ENCODE measurements at regions of chr10 and their contacts with region 1.

Region 1: DNA sequence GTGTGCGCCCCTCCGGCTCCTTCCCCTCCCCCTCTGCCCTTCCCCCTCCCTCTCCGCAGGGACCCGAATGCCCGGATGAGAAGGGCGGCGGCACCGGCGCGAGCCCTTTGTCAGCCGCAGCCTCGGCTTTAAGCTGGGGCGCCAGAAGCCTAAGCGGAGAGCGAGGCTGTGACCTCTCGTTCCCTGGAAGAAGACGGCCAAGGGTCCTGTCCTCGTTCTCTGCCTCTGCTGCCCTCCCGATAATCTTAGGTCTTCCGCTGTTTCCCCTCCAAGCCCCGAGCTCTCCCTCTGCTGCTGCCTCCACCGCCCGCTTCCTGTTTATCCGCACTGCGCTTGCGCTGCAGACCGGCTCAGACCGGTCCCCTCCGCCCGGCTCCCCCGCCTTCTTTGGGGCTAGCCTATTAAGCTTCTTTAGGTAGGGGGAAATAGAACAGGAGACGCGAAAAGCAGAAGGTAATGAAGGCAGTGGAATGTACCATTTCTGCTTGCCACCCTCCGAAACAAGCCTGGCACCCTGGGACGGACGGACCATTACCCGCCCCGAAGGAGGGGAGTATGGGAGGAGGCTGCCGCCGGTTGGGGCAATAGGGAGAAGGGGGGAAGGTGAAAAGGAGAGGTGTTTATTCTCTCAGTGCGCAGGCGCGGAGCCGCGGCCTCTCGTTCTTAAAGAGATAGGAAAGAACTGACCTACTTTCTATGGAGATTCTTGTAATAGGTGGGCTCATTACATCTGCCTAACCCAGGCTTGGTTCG is at the start of gene OGA:
- DNase-seq: peak; percentile 99
- H3K4me3 Mint-ChIP-seq: peak within 1 kb of the TSS; percentile 89
- H3K27ac Mint-ChIP-seq: peak within 1 kb of the TSS; percentile 95
- H3K4me1 Mint-ChIP-seq: peaks cover 48% of the 10 kb centered on the region
- H3K27me3 Mint-ChIP-seq: no peaks in the 10 kb centered on the region
- total RNA-seq, gene OGA: 99.9 and 102 TPM in 2 replicates

Region 2: DNA sequence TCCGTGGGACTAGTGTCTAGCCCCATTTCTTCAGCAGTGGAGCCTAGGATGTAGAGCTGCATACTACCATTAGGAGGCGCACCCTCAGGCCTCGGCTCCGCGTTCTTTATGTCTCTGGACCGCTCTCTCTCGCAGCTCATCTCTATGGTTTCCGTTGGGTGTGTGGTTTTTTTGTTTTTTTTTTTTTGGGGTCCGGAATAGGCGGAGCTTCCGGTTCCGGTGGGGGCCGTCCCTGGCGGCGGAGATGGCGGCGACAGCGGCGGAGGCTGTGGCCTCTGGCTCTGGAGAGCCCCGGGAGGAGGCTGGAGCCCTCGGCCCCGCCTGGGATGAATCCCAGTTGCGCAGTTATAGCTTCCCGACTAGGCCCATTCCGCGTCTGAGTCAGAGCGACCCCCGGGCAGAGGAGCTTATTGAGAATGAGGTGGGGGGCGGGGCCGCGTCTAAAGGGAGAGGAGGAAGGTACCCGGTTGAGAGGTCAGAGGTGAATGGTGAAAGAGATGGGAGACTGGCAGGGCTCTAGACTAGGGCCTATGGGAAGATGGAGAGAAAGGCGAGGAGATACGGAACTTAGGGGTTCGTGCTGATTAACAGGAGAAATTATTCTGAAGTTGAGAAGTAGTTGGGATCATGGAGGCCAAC is 1282.5 kb before region 1 on chr10 and contains the start of gene HIF1AN:
- intact Hi-C with region 1: loop called (anchors 10 kb)
- DNase-seq: peak; percentile 97
- H3K4me3 Mint-ChIP-seq: no peak within 1 kb of the TSS
- H3K27ac Mint-ChIP-seq: no peak within 1 kb of the TSS
- H3K4me1 Mint-ChIP-seq: peaks cover 29% of the 10 kb centered on the region
- H3K27me3 Mint-ChIP-seq: no peaks in the 10 kb centered on the region
- total RNA-seq, gene HIF1AN: 47.4 and 51.3 TPM in 2 replicates

Region 3: DNA sequence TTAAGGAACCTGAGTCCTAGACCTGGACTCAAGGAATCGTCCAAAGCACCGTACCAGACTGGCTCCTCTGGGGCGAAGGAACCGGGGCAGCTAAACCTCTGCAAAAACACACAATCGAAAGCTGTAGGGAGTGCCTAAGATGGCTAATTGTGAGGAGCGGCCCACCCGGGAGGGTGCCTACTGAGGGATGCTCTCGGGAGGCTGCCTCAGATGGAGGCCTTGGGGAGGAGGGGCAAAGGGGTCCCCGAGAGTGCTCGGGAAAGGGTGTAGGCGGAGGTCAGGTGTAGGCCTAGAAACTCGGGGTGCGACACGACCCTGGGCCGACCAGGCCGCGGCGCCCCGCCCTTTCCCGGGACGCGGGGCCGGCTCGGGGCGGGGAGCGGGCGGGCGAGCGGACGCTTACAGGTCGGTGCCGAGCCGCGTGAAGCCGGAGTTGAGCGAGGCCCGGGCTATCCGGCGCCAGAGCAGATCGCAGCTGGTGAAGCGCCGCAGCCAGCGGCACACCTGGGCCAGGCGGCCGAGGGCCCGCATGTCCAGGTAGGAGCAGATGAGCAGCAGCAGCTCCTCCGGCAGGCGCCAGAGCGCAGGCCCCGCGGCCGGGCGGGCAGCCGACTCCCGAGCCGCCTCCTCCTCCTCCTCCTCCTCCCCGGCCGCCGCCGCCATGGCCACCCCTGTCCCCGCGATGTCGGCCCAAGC is 124.2 kb before region 1 on chr10:
- intact Hi-C with region 1: loop called (anchors 5 kb)
- DNase-seq: peak; percentile 93
- H3K4me3 Mint-ChIP-seq: peak overlapping the region; percentile 98
- H3K27ac Mint-ChIP-seq: peak overlapping the region; percentile 99
- H3K4me1 Mint-ChIP-seq: peaks cover 24% of the 10 kb centered on the region
- H3K27me3 Mint-ChIP-seq: no peaks in the 10 kb centered on the region

Region 4: GRCh38 chr10:101807158-101807557 is 11.1 kb before region 1 on chr10:
- intact Hi-C with region 1: loop called (anchors 1 kb)
- DNase-seq: no peak
- H3K4me3 Mint-ChIP-seq: no peak overlapping the region
- H3K27ac Mint-ChIP-seq: no peak overlapping the region
- H3K4me1 Mint-ChIP-seq: peaks cover 9% of the 10 kb centered on the region
- H3K27me3 Mint-ChIP-seq: no peaks in the 10 kb centered on the region

Region 5: GRCh38 chr10:101840741-101841453 is 22.6 kb after region 1 on chr10:
- intact Hi-C with region 1: loop called (anchors 2 kb)
- DNase-seq: peak; percentile 94
- H3K4me3 Mint-ChIP-seq: peak overlapping the region; percentile 86
- H3K27ac Mint-ChIP-seq: peak overlapping the region; percentile 62
- H3K4me1 Mint-ChIP-seq: peaks cover 38% of the 10 kb centered on the region
- H3K27me3 Mint-ChIP-seq: peaks cover 10% of the 10 kb centered on the region

Region 6: GRCh38 chr10:101952191-101952590 is 133.9 kb after region 1 on chr10:
- intact Hi-C with region 1: no loop called
- DNase-seq: no peak
- H3K4me3 Mint-ChIP-seq: no peak overlapping the region
- H3K27ac Mint-ChIP-seq: no peak overlapping the region
- H3K4me1 Mint-ChIP-seq: no peaks in the 10 kb centered on the region
- H3K27me3 Mint-ChIP-seq: no peaks in the 10 kb centered on the region

Region 7: GRCh38 chr10:102132563-102133372 is 314.5 kb after region 1 on chr10 and contains the start of gene PPRC1:
- intact Hi-C with region 1: loop called (anchors 5 kb)
- DNase-seq: peak; percentile 99
- H3K4me3 Mint-ChIP-seq: peak within 1 kb of the TSS; percentile 97
- H3K27ac Mint-ChIP-seq: peak within 1 kb of the TSS; percentile 100
- H3K4me1 Mint-ChIP-seq: peaks cover 33% of the 10 kb centered on the region
- H3K27me3 Mint-ChIP-seq: no peaks in the 10 kb centered on the region
- total RNA-seq, gene PPRC1: 111 and 113 TPM in 2 replicates

Measured in activated CD4-positive, alpha-beta T cell treated with anti-CD3 and anti-CD28 coated beads, Interleukin-2, amount 10 ng/mL, durations not matched to agents 24 days and 14 days (primary cell).